Psoas muscle (tissue), 8 donors: ENCODE measurements at regions of chr2 and their contacts with region 1.

Region 1: DNA sequence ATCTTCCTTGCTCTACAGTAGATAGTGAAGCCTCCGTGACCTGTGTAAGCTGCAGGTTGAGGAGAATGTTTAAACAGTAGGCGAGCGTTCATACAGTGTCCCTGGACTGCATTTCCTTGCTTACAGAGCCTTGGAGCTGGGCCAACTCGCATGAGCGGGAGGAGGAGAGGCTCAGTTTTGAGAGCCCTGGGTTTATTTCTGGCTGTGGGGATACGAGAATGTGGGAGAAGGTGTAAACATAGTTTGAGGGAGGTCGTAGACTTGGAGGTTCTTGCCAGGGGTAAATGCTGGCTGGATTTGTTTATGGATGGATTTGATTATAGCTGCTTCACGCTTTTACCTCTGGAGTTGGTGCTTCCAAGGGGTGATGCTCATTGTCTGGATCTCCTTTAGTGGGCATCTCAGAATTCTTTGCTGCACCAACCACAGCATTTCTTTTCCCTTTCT is 20.8 kb downstream of the CRIM1 start:
- DNase-seq: peak; percentile 65 to 82
- ATAC-seq: peak; percentile 46 to 67 (median 48)
- H3K4me3 ChIP-seq: no peak overlapping the region
- H3K27ac ChIP-seq: no peak overlapping the region
- H3K4me1 ChIP-seq: peaks cover 83% of the 10 kb centered on the region
- H3K27me3 ChIP-seq: no peaks in the 10 kb centered on the region
- CTCF ChIP-seq: no peak

Region 2: DNA sequence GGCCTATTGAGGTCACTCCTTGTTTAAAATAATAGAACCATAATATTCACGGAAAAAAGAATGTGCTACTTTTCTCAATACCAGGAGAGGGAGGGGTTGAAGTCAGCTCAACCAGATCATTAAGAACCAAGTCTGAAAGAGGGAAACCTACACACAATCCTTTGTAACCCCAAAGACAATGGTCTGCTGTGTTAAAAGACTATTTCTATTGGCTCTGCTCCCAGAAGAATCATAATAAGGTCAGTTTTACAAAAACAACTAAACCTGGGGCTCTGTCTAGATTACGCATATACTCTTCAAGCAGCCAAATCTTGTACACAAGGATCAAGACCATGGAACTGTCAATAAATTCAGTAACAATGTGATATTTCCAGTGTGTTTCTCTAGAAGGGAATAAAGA is 198.0 kb before region 1 on chr2:
- intact Hi-C with region 1: no loop called
- DNase-seq: no peak
- ATAC-seq: no peak
- H3K4me3 ChIP-seq: no peak overlapping the region
- H3K27ac ChIP-seq: no peak overlapping the region
- H3K4me1 ChIP-seq: no peaks in the 10 kb centered on the region
- H3K27me3 ChIP-seq: peaks cover 0 to 3% (median 0%) of the 10 kb centered on the region in 3 donors
- CTCF ChIP-seq: no peak

Region 3: GRCh38 chr2:36416370-36417165 is 40.2 kb after region 1 on chr2:
- intact Hi-C with region 1: loop called (anchors 5 to 10 kb)
- DNase-seq: no peak
- ATAC-seq: peak in 3 of 4 donors; percentile 23 to 45 (median 26)
- H3K4me3 ChIP-seq: no peak overlapping the region
- H3K27ac ChIP-seq: no peak overlapping the region
- H3K4me1 ChIP-seq: peaks cover 100% of the 10 kb centered on the region
- H3K27me3 ChIP-seq: no peaks in the 10 kb centered on the region
- CTCF ChIP-seq: no peak

Region 4: DNA sequence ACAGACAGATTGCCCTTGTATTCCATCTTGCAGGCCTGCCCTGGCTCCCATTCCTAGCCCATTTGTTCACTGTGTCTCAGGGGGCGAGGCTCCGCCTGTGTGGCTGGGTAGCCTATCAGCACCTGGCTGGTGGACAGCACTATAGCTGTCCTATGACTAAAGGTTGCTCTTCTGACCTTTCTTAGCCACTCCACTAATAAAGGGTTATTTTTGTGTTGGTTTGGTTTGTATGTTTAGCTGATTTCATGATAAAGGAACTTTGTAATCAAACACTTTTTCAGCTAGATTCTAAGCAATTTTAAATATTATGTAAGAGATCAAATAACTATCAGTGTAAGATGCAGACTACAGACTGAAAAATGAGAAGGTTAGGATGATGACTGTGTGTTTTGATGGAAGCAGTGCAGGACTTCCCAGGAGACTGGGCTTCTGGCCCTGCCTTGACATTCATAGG is 51.5 kb after region 1 on chr2:
- intact Hi-C with region 1: loop called in 1 of 2 experiments (anchors 10 kb)
- DNase-seq: peak; percentile 26 to 66
- ATAC-seq: peak; percentile 78 to 93 (median 86)
- H3K4me3 ChIP-seq: no peak overlapping the region
- H3K27ac ChIP-seq: peak overlapping the region; percentile 8
- H3K4me1 ChIP-seq: peaks cover 96% of the 10 kb centered on the region
- H3K27me3 ChIP-seq: no peaks in the 10 kb centered on the region
- CTCF ChIP-seq: no peak